MCF 10A (cell line): ENCODE measurements at regions of chr13 and their contacts with region 1.

Region 1: DNA sequence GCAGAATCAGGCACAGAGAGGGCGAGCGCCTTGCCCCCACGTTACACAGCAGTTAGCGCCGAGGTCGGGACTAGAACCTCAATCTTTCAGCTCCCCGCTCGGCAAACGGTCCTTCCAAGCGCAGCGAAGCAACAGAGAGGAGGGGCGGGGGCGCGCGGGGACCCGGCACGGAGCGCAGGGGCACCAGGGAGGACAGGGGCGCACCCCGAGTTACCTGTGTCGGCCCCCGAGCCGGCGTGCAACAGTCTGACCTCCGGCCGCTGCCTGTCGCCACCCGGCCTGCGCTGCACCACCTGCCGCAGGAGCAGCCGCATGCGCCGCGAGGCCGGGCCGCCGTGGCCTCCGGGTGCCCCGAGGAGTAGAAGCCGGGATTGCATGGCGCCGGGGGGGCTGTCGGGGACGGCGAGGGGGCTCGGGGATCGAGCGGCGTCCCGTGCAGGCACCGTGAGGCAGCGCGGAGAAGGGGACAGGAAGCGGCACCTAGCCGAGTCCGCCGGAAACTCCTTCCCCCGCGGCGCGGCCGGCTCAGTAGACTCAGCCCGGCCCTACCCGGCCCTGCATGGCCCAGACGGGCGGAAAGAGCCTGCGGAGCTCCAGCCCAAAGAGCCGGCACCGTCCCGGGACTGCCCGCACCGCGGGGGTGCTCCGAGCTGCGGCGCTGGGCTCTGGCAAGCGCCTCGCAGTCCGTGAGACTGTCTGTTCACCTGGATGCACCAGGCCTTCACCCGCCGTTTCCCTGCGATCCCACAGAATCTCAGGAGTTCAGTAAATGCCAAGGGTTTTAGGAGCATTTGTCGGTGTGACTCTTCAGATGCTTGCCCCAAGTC is at the start of gene VWA8:
- DNase-seq: peak; percentile 73
- H3K4me3 Mint-ChIP-seq: peak within 1 kb of the TSS; percentile 86
- H3K27ac Mint-ChIP-seq: peak within 1 kb of the TSS; percentile 90
- H3K4me1 Mint-ChIP-seq: peaks cover 23% of the 10 kb centered on the region
- H3K27me3 Mint-ChIP-seq: no peaks in the 10 kb centered on the region
- CTCF ChIP-seq: no peak
- total RNA-seq, gene VWA8: 20.1 and 21.4 TPM in 2 replicates

Region 2: GRCh38 chr13:41905600-41906254 is 55.1 kb before region 1 on chr13:
- CTCF ChIA-PET with region 1: no interaction called
- POLR2A ChIA-PET with region 1: interaction called, 3 read pairs
- intact Hi-C with region 1: loop called (anchors 2 kb)
- DNase-seq: peak; percentile 65
- H3K4me3 Mint-ChIP-seq: no peak overlapping the region
- H3K27ac Mint-ChIP-seq: peak overlapping the region; percentile 7
- H3K4me1 Mint-ChIP-seq: peaks cover 10% of the 10 kb centered on the region
- H3K27me3 Mint-ChIP-seq: no peaks in the 10 kb centered on the region
- CTCF ChIP-seq: peak; percentile 66

Region 3: GRCh38 chr13:41942462-41943094 is 18.3 kb before region 1 on chr13:
- CTCF ChIA-PET with region 1: no interaction called
- POLR2A ChIA-PET with region 1: interaction called, 10 read pairs
- intact Hi-C with region 1: no loop called
- DNase-seq: peak; percentile 34
- H3K4me3 Mint-ChIP-seq: no peak overlapping the region
- H3K27ac Mint-ChIP-seq: no peak overlapping the region
- H3K4me1 Mint-ChIP-seq: no peaks in the 10 kb centered on the region
- H3K27me3 Mint-ChIP-seq: no peaks in the 10 kb centered on the region
- CTCF ChIP-seq: no peak

Region 4: DNA sequence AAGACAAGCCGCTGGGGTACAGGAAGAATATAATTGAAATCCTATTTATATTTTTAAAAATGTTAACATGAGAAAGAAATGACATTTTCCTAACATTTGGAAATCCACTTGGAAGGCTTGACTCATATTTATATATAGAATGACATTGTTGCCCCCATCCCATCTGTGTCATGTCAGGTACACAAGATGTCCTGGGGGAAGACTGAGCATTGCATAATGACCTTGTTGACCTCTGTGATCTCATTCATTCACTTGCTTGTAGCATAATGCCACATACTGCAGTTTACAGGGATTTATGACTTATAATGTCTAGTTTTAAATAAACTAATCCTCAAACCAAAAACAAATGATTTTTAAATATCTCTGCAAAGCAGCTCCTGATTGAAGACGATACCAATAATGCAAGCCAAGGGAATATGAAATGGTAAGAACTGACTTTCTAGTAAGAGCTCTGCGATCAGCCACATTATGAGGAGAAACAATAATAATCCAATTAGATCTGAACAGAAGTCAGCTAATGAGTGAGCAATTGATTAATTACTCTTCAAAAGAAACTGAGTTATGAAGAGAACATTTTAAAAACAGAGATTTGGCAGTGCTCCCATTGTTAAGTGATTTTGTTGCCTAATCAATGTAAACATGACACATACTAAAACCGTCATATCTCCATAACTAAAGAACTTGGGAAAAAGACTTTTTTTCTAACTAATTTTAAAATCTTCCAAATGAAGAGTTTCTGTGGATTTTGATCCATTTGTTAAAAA is 21.3 kb after region 1 on chr13:
- CTCF ChIA-PET with region 1: interaction called, 4 read pairs
- POLR2A ChIA-PET with region 1: interaction called, 51 read pairs
- intact Hi-C with region 1: no loop called
- DNase-seq: peak; percentile 78
- H3K4me3 Mint-ChIP-seq: no peak overlapping the region
- H3K27ac Mint-ChIP-seq: no peak overlapping the region
- H3K4me1 Mint-ChIP-seq: peaks cover 18% of the 10 kb centered on the region
- H3K27me3 Mint-ChIP-seq: peaks cover 16% of the 10 kb centered on the region
- CTCF ChIP-seq: no peak

Region 5: GRCh38 chr13:42039946-42040729 is 79.3 kb after region 1 on chr13:
- CTCF ChIA-PET with region 1: interaction called, 15 read pairs
- POLR2A ChIA-PET with region 1: interaction called, 96 read pairs
- intact Hi-C with region 1: loop called (anchors 1 kb)
- DNase-seq: peak; percentile 82
- H3K4me3 Mint-ChIP-seq: peak overlapping the region; percentile 84
- H3K27ac Mint-ChIP-seq: peak overlapping the region; percentile 84
- H3K4me1 Mint-ChIP-seq: peaks cover 6% of the 10 kb centered on the region
- H3K27me3 Mint-ChIP-seq: no peaks in the 10 kb centered on the region
- CTCF ChIP-seq: no peak

Region 6: GRCh38 chr13:42110410-42111155 is 149.7 kb after region 1 on chr13:
- CTCF ChIA-PET with region 1: interaction called, 3 read pairs
- POLR2A ChIA-PET with region 1: interaction called, 13 read pairs
- intact Hi-C with region 1: loop called (anchors 2 kb)
- DNase-seq: peak; percentile 82
- H3K4me3 Mint-ChIP-seq: no peak overlapping the region
- H3K27ac Mint-ChIP-seq: peak overlapping the region; percentile 25
- H3K4me1 Mint-ChIP-seq: peaks cover 26% of the 10 kb centered on the region
- H3K27me3 Mint-ChIP-seq: no peaks in the 10 kb centered on the region
- CTCF ChIP-seq: peak; percentile 60

Region 7: DNA sequence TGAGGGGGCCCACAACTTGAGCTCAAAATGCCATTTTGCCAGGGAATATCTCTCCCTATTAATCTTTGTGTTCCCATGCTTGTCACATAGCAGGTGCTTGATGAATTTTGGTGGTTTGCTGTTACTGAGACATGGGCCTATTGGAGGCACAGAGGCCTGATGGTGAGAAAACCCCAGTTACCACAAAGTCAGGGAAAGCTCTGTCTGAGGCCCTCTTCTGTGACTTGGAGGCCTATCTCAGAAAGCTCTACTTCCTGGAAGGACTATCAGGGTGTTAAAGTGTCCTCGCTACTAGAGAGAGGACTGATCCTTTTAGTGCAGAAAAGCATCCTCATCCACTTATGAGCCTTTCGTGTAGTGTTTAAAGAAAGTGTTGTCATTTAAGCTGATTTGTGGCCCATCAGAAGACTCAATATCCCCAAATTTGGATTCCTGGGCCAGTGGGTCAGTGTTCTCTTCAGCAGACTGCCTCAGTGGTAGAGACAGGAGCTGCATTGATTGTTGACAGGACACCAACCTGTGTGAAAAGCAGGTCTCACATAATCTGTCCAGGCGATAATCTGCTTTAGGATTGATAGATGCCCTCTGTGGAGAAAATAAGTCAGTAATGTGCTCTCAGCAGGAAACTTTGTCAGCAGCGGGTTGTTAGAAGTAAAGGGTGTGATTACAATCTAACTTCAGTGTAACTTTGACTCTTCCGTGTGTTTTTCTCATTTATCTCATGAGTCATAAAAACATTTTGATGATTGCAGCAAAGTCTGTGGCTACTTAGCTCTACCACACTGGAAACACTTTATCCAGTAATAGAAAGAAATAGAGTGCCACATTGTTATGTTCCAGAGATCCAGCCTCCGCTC is 432.1 kb after region 1 on chr13:
- CTCF ChIA-PET with region 1: no interaction called
- POLR2A ChIA-PET with region 1: no interaction called
- intact Hi-C with region 1: no loop called
- DNase-seq: no peak
- H3K4me3 Mint-ChIP-seq: no peak overlapping the region
- H3K27ac Mint-ChIP-seq: no peak overlapping the region
- H3K4me1 Mint-ChIP-seq: peaks cover 15% of the 10 kb centered on the region
- H3K27me3 Mint-ChIP-seq: no peaks in the 10 kb centered on the region
- CTCF ChIP-seq: no peak